ENCODE measurements at regions of chr11 and their contacts with region 1.

Region 1: GRCh38 chr11:62694455-62695167 is 5.3 kb upstream of the LRRN4CL start:
- DNase-seq: peak; percentile 56 to 84
- H3K4me3 ChIP-seq: no peak overlapping the region
- H3K4me1 ChIP-seq: no peaks in the 10 kb centered on the region
- H3K27me3 ChIP-seq: no peaks in the 10 kb centered on the region

Region 2: DNA sequence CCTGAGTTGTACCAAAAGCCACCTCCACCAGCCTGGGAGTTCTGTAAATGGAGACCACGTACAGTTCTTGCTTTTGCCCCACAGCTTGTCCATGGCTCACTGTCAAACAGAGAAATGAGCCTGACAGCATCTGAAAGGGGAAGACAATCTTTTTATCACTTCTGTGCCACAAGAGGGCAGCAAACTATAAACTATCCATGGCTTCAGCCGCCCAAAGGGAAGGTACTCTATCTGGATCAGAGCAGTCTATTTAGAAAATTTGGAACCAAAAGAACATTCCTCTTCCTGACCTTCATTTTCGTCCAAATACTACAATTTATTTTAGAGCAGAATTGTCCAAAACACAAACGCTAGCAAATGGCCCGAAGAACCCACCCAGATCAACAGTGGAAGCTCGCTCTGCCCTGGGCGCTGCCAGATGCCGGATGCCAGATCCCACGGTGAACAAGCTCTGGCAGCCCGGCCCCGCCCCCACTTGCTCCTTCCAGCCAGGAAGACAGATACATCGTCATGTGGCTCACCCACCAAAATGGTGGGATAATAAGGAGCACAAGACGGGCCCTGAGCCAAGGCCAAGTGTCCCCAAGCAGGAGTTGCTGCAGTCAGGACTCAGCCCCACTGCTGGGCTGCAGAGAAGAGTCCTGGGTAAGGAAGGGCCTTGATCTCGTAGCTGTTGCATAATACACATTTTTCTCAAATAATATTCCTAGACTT is 299.6 kb before region 1 on chr11:
- in situ Hi-C with region 1: loop called (anchors 10 kb)
- DNase-seq: peak; percentile 63 to 70
- H3K4me3 ChIP-seq: no peak overlapping the region
- H3K4me1 ChIP-seq: no peaks in the 10 kb centered on the region
- H3K27me3 ChIP-seq: no peaks in the 10 kb centered on the region

Region 3: DNA sequence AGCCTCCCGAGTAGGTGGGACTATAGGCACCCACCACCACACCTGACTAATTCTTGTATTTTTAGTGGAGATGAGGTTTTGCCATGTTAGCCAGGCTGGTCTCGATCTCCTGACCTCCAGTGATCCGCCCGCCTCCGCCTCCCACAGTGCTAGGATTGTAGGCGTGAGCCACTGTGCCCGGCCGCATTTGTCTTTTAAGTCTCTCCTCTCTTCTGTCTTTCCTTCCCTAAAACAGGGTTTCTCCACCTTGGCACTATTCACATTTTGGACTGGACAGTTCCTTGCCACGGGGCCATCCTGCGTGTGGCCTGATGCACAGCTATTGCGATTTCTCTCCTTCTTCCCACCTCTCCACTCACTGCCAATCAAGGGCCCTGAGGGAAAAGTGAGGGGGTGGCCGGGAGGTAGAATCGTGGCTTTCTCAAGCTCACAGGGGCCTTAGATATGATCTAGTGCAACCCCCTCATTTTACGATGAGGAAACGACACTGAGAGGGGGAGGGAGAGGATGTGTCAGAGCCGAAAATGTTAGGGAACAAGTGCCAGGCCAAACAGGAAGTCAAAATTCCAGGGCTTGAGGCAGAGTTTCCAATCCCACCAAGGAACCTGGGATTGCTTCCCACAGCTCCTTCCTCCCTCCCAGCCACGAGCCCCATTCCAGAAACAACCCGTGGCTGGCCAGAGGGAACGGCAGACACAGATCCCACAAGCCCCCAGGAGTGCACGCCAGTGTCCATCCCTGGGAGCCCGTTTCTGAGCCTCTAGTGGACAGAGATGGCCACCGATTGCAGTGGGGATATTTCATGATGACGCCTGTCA is 254.6 kb before region 1 on chr11:
- in situ Hi-C with region 1: no loop called
- DNase-seq: no peak
- H3K4me3 ChIP-seq: no peak overlapping the region
- H3K4me1 ChIP-seq: no peaks in the 10 kb centered on the region
- H3K27me3 ChIP-seq: no peaks in the 10 kb centered on the region

Measured in HAP-1 (cell line).